Panc1 (cell line): ENCODE measurements at regions of chr1 and their contacts with region 1.

Region 1: DNA sequence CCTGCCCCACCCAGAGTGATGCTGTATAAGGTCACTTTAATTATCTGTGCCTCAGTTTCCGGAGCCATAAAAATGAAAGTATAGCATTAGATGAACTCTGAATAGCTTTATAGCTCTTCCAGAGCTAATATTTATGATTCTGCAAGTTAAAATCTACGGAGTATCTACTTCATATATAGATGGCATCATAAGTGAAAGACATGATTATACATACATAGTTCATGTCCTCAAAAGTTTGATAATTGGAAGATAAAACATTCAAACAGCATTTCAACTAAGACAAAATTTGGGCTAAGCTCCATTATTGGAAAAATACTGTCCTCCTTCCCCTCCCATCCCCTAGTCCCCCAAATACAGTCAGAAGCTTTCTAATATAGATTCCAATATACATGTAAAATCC is 4.2 kb downstream of the AKT3 start:
- DNase-seq: no peak
- ATAC-seq: no peak
- H3K4me3 ChIP-seq: no peak overlapping the region
- H3K27ac ChIP-seq: no peak overlapping the region
- H3K4me1 ChIP-seq: no peaks in the 10 kb centered on the region
- H3K27me3 ChIP-seq: peaks cover 8% of the 10 kb centered on the region
- CTCF ChIP-seq: no peak

Region 2: GRCh38 chr1:243672539-243673074 is 173.3 kb before region 1 on chr1:
- CTCF ChIA-PET with region 1: no interaction called
- POLR2A ChIA-PET with region 1: interaction called, 11 read pairs
- in situ Hi-C with region 1: no loop called
- intact Hi-C with region 1: no loop called
- DNase-seq: no peak
- ATAC-seq: no peak
- H3K4me3 ChIP-seq: no peak overlapping the region
- H3K27ac ChIP-seq: no peak overlapping the region
- H3K4me1 ChIP-seq: no peaks in the 10 kb centered on the region
- H3K27me3 ChIP-seq: no peaks in the 10 kb centered on the region
- CTCF ChIP-seq: no peak

Region 3: GRCh38 chr1:243946946-243947345 is 101.1 kb after region 1 on chr1:
- CTCF ChIA-PET with region 1: no interaction called
- POLR2A ChIA-PET with region 1: no interaction called
- in situ Hi-C with region 1: no loop called
- intact Hi-C with region 1: no loop called
- DNase-seq: no peak
- ATAC-seq: no peak
- H3K4me3 ChIP-seq: no peak overlapping the region
- H3K27ac ChIP-seq: no peak overlapping the region
- H3K4me1 ChIP-seq: no peaks in the 10 kb centered on the region
- H3K27me3 ChIP-seq: no peaks in the 10 kb centered on the region
- CTCF ChIP-seq: peak; percentile 45; the same call in 1 of the 2 replicates

Region 4: DNA sequence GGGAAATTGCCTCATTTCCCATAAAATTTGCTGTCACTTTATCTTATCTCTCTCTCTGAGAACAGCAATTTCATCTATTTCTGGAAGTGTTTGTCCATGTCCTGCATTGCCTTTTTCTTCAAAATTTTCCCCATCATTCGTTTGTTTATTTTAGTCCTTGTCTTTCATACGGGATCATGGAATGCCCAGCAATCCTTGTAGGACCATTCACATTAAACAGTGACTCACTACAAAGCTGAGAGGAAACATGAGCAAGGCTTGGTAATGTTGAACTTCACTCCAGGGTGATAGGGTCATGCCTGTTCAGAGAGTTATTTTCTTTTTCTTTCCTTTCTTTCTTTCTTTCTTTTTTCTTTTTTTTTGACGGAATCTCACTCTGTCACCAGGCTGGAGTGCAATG is 1050.7 kb after region 1 on chr1:
- CTCF ChIA-PET with region 1: no interaction called
- POLR2A ChIA-PET with region 1: no interaction called
- in situ Hi-C with region 1: no loop called
- intact Hi-C with region 1: no loop called
- DNase-seq: no peak
- ATAC-seq: no peak
- H3K4me3 ChIP-seq: no peak overlapping the region
- H3K27ac ChIP-seq: no peak overlapping the region
- H3K4me1 ChIP-seq: no peaks in the 10 kb centered on the region
- H3K27me3 ChIP-seq: no peaks in the 10 kb centered on the region
- CTCF ChIP-seq: no peak